ENCODE measurements at regions of chr18 and their contacts with region 1.

Region 1: DNA sequence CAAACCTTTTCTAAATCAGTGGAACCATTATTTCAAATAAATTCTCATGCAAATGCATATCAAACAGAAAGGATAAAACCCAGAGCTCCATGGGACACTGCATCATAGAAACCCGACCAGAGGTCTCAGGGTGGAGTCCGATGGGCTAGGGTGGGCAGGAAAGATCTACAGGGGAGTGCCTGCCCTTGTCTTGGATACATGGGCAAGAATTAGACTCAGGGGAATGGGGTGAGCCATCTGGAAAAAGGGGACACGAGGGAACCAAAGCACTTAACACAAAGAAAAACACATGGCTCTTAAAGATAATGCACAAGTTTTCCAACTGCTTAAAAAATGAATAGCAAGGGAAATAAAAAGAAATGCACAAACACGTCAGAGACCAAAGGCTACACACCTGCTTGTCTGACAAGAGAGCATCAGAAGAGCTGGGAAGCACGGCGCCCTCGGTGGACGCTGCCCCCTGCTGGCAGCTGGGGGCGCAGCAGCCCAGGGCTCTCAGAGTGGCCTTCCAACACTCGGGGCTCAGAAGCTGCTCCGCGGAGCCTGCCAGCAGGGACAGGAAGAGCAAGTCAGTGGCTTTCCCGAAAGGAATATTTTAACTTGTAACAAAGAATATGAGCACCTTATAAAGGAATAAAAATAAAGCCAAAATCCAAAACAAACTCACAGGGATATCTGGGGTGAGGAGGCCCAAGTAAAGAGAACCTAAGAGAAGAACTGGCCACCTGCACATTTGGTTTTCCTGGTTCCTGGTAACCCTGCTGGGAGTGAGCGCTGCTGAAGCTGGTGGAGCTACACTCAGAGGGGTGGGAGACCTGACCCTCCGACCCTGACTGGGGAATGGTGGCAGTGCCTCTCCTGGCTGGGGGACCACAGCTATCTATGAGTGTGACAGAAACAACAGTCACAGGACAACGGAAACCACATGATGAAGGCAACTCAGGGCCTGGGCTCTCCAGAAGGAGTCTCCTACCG is 54.5 kb downstream of the SIGLEC15 start:
- DNase-seq: peak; percentile 54 to 74 (median 68)
- H3K4me3 ChIP-seq: no peak overlapping the region
- H3K27ac ChIP-seq: no peak overlapping the region
- H3K4me1 ChIP-seq: peaks cover 0 to 3% (median 0%) of the 10 kb centered on the region in 4 experiments
- H3K27me3 ChIP-seq: no peaks in the 10 kb centered on the region

Region 2: DNA sequence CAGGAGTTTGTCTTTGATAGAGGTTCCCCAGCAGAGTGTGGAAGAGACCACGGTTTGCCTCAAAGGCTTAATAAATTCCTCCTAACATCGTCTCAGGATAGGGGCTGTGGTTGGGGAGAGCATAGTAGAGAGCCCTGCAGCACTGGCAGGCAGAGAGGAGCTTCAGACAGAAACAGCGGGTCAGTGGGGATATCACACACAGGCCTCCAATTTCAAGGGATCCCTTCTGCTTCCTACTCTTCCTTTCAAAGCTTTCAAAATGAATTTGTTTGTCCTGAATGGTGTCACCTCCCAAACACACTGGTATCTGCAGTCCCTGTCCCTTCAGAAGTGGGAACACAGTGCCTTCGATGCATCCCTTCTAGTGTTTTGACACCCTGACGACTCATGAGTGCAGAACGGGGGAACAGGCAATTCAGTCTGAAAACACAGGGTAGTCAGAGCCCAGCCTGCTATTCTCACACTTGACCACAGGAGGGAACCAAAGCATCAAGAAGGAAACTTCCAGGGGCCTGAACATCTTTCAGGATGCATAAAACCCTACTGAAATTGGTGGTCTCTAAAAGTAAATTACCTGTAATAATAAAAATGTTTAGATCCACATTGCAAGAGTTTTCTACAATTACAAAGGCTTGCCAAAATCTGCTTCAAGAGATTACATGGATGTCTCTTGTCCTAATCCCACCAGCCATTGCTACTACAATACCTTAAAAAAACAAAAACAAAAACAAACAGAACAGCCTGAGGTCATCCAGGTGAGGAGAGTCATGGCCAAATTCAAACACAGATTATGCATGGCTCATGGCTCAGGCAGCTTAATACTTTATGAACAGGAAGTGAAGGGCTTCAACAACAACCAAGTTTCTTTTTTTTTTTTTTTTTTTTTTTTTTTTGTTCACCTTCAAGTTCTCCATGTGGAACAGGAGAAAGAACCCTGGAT is 214.9 kb before region 1 on chr18:
- CTCF ChIA-PET with region 1: interaction called, 176 read pairs
- POLR2A ChIA-PET with region 1: interaction called, 3 read pairs
- DNase-seq: peak; percentile 69 to 84 (median 77)
- H3K4me3 ChIP-seq: no peak overlapping the region
- H3K27ac ChIP-seq: no peak overlapping the region
- H3K4me1 ChIP-seq: peaks cover 24 to 48% (median 37%) of the 10 kb centered on the region in 4 experiments
- H3K27me3 ChIP-seq: no peaks in the 10 kb centered on the region

Region 3: DNA sequence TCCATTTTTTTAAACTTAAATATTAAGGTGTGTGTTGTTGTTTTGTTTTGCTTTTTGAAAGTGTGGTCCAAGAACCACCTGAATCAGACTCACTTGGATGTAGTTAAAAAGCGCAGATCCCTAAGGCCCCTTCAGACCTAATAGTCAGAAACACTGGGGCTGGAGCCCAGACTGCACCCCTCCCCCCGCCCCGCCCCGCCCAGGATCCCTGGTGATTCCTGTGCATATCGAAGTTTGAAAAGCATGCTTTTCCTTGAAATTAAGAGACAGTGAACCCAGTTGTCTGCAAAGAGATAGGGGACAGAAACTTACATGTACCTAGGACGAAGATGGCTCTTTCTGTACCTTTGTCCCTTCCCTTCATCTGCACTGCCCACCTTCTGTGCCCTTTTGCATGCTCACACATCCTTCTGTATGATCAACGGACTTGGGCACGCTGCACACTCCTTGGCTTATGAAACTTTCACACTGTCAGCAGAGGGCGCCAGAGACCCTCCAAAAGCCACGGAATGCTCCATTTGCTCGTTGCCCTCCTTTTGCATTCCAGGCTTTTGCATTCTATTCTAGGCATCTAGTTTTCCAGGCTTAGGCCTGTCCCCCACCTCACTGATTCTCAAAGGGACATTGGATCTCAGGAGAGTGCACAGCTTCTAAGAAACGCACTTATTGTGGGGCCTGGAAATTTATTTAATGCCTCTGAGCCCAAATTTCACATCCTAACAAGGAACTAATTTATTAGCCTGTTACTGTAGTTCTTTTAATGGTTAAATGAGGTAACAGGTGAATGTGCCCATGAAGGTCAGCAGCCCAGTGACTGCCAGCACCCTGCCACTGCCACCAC is 188.8 kb before region 1 on chr18:
- CTCF ChIA-PET with region 1: interaction called, 25 read pairs
- POLR2A ChIA-PET with region 1: no interaction called
- DNase-seq: peak; percentile 76 to 87 (median 81)
- H3K4me3 ChIP-seq: no peak overlapping the region
- H3K27ac ChIP-seq: no peak overlapping the region
- H3K4me1 ChIP-seq: peaks cover 20 to 37% (median 29%) of the 10 kb centered on the region in 4 experiments
- H3K27me3 ChIP-seq: no peaks in the 10 kb centered on the region

Region 4: GRCh38 chr18:45850021-45850420 is 29.9 kb before region 1 on chr18:
- CTCF ChIA-PET with region 1: interaction called, 20 read pairs
- POLR2A ChIA-PET with region 1: no interaction called
- DNase-seq: no peak
- H3K4me3 ChIP-seq: no peak overlapping the region
- H3K27ac ChIP-seq: no peak overlapping the region
- H3K4me1 ChIP-seq: peaks cover 0 to 4% (median 0%) of the 10 kb centered on the region in 4 experiments
- H3K27me3 ChIP-seq: no peaks in the 10 kb centered on the region

Region 5: GRCh38 chr18:45891806-45892205 is 11.8 kb after region 1 on chr18:
- CTCF ChIA-PET with region 1: interaction called, 15 read pairs
- POLR2A ChIA-PET with region 1: interaction called, 5 read pairs
- DNase-seq: no peak
- H3K4me3 ChIP-seq: no peak overlapping the region
- H3K27ac ChIP-seq: no peak overlapping the region
- H3K4me1 ChIP-seq: peaks cover 0 to 7% (median 3%) of the 10 kb centered on the region in 4 experiments
- H3K27me3 ChIP-seq: no peaks in the 10 kb centered on the region

Region 6: GRCh38 chr18:45923138-45923537 is 43.2 kb after region 1 on chr18:
- CTCF ChIA-PET with region 1: no interaction called
- POLR2A ChIA-PET with region 1: no interaction called
- DNase-seq: no peak
- H3K4me3 ChIP-seq: no peak overlapping the region
- H3K27ac ChIP-seq: no peak overlapping the region
- H3K4me1 ChIP-seq: peaks cover 0 to 6% (median 2%) of the 10 kb centered on the region in 4 experiments
- H3K27me3 ChIP-seq: no peaks in the 10 kb centered on the region

Region 7: GRCh38 chr18:46184727-46185126 is 304.8 kb after region 1 on chr18:
- CTCF ChIA-PET with region 1: no interaction called
- POLR2A ChIA-PET with region 1: no interaction called
- DNase-seq: peak in 2 of 3 donors; percentile 43 to 51
- H3K4me3 ChIP-seq: no peak overlapping the region
- H3K27ac ChIP-seq: peak overlapping the region in 1 of 2 experiments; percentile 15
- H3K4me1 ChIP-seq: peaks cover 10 to 32% (median 20%) of the 10 kb centered on the region in 4 experiments
- H3K27me3 ChIP-seq: no peaks in the 10 kb centered on the region

Measured in common myeloid progenitor, CD34-positive (primary cell).